PC-3 (cell line): ENCODE measurements at regions of chr2 and their contacts with region 1.

Region 1: GRCh38 chr2:39059366-39059952 is 61.4 kb downstream of the SOS1 start:
- DNase-seq: peak; percentile 77
- ATAC-seq: no peak
- H3K4me3 ChIP-seq: no peak overlapping the region
- H3K27ac ChIP-seq: no peak overlapping the region
- H3K4me1 ChIP-seq: no peaks in the 10 kb centered on the region
- H3K27me3 ChIP-seq: no peaks in the 10 kb centered on the region
- CTCF ChIP-seq: peak; percentile 89

Region 2: GRCh38 chr2:38975042-38975441 is 84.4 kb before region 1 on chr2:
- CTCF ChIA-PET with region 1: no interaction called
- POLR2A ChIA-PET with region 1: no interaction called
- intact Hi-C with region 1: no loop called
- DNase-seq: no peak
- ATAC-seq: no peak
- H3K4me3 ChIP-seq: no peak overlapping the region
- H3K27ac ChIP-seq: no peak overlapping the region
- H3K4me1 ChIP-seq: no peaks in the 10 kb centered on the region
- H3K27me3 ChIP-seq: no peaks in the 10 kb centered on the region
- CTCF ChIP-seq: no peak

Region 3: GRCh38 chr2:39099870-39100728 is 40.6 kb after region 1 on chr2:
- CTCF ChIA-PET with region 1: interaction called, 13 read pairs
- POLR2A ChIA-PET with region 1: no interaction called
- intact Hi-C with region 1: no loop called
- DNase-seq: peak; percentile 46
- ATAC-seq: peak; percentile 50
- H3K4me3 ChIP-seq: no peak overlapping the region
- H3K27ac ChIP-seq: no peak overlapping the region
- H3K4me1 ChIP-seq: peaks cover 9% of the 10 kb centered on the region
- H3K27me3 ChIP-seq: no peaks in the 10 kb centered on the region
- CTCF ChIP-seq: no peak

Region 4: GRCh38 chr2:39227628-39228412 is 168.4 kb after region 1 on chr2:
- CTCF ChIA-PET with region 1: interaction called, 11 read pairs
- POLR2A ChIA-PET with region 1: no interaction called
- intact Hi-C with region 1: loop called (anchors 1 kb)
- DNase-seq: peak; percentile 65
- ATAC-seq: peak; percentile 81
- H3K4me3 ChIP-seq: no peak overlapping the region
- H3K27ac ChIP-seq: no peak overlapping the region
- H3K4me1 ChIP-seq: no peaks in the 10 kb centered on the region
- H3K27me3 ChIP-seq: no peaks in the 10 kb centered on the region
- CTCF ChIP-seq: peak; percentile 94